Left ventricle myocardium inferior (tissue), 1 donor: ENCODE measurements at regions of chr11 and their contacts with region 1.

Region 1: GRCh38 chr11:87421422-87421821 is 383.7 kb downstream of the TMEM135 start:
- DNase-seq: no peak
- H3K4me3 ChIP-seq: no peak overlapping the region
- H3K27ac ChIP-seq: no peak overlapping the region
- H3K4me1 ChIP-seq: peaks cover 12% of the 10 kb centered on the region
- H3K27me3 ChIP-seq: peaks cover 7% of the 10 kb centered on the region
- CTCF ChIP-seq: peak; percentile 90

Region 2: GRCh38 chr11:87223816-87224215 is 197.6 kb before region 1 on chr11:
- intact Hi-C with region 1: no loop called
- DNase-seq: no peak
- H3K4me3 ChIP-seq: no peak overlapping the region
- H3K27ac ChIP-seq: no peak overlapping the region
- H3K4me1 ChIP-seq: peaks cover 15% of the 10 kb centered on the region
- H3K27me3 ChIP-seq: no peaks in the 10 kb centered on the region
- CTCF ChIP-seq: no peak

Region 3: DNA sequence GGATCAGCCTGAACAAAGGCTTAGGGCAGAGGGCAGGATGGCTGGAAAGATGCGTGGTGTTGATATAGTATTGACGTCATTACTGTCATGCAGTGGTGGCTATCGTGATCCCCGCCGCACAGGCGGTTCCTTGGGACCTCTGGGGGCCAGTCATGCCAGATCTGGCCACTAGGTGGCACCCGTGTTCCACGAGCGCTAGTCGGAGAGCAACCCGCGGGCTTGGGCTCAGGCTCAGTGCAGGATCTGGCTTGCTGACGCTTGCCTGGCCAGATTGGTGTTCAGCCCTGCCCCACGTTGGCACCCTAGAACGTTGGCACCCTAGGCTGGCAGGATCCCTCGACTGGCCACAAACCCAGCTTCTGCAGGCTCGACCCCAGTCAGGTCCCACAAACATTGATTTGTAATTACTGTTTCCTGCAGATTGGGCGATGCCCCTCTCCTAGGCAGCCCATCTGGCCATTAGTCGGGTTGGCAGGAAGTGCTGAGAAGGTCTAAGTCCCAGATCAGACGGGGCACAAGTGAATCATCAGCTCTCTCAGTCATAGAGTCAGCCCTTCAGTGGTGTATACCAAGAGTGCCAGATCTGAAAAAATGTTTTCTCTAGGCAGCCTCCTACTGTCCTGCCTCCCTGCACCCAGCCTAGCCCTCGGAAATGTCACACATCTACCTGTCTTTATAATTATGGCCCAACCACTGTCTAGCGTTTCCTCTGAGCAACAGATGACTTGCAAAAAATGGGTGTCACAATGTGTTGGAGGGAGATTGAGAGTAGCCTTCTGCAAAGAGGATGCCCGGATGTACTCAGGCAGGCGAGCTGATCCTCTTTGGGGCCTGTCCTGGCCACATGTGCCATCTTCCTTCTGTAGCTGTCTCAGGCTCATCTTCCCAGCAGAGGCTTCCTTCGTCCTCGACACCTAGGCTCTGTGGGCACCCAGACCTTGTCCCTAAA is 68.4 kb before region 1 on chr11:
- intact Hi-C with region 1: loop called (anchors 5 kb)
- DNase-seq: peak; percentile 84
- H3K4me3 ChIP-seq: no peak overlapping the region
- H3K27ac ChIP-seq: peak overlapping the region; percentile 48
- H3K4me1 ChIP-seq: peaks cover 42% of the 10 kb centered on the region
- H3K27me3 ChIP-seq: no peaks in the 10 kb centered on the region
- CTCF ChIP-seq: peak; percentile 100